ENCODE measurements at regions of chr14 and their contacts with region 1.

Region 1: GRCh38 chr14:58138714-58139482 is 13.1 kb downstream of the ARMH4 start:
- DNase-seq: no peak
- ATAC-seq: no peak
- H3K4me3 ChIP-seq: no peak overlapping the region
- H3K27ac ChIP-seq: no peak overlapping the region
- H3K4me1 ChIP-seq: no peaks in the 10 kb centered on the region
- H3K27me3 ChIP-seq: no peaks in the 10 kb centered on the region
- CTCF ChIP-seq: no peak
- POLR2A ChIP-seq: no peak
- RAD21 ChIP-seq: no peak

Region 2: DNA sequence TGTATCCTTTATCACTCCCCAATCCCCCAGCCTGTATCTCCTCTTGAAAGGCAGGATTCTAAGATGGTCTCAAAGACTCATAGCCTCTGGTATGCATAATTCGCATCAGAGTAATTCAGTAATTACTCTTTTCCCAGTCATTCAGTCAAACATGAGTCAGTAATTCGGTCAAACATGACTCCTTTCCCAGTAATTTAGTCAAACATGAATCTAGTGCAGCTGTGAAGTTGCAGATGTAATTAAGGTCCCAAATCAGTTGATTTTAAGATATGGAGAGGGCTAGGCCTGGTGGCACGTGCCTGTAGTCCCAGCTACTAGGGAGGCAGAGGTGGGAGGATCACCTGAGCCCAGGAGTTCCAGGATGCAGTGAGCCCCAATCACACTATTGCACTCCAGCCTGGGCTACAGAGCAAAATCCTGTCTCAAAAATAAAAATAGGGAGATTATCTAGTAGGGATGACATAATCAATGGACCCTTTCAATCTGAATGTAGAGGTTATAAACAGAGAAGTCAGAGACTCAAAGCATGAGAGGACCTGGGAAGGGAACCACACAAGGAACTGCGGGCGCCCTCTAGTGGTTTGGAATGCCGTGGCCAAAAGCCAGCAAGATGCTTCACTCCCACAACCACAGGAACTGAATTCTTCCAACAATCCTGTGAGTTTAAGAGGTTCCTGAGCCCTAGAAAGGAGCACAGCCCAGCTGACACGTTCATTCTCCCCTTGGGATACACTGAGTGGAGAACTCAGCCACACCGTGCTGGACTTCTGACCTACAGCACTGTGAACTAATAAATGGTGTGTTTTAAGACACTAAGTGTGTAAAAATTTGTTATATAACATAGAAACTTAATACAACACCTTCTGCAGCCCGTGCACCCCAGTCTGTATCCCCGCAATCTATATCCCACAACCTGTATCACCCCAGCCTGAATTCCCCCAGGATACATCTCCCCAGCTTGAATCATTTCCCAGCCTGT is 27.4 kb after region 1 on chr14:
- CTCF ChIA-PET with region 1: interaction called, 6 read pairs
- POLR2A ChIA-PET with region 1: no interaction called
- dilution Hi-C with region 1: no loop called
- in situ Hi-C with region 1: no loop called
- intact Hi-C with region 1: loop called (anchors 1 kb)
- DNase-seq: peak; percentile 78
- ATAC-seq: peak; percentile 78
- H3K4me3 ChIP-seq: no peak overlapping the region
- H3K27ac ChIP-seq: no peak overlapping the region
- H3K4me1 ChIP-seq: no peaks in the 10 kb centered on the region
- H3K27me3 ChIP-seq: peaks cover 6% of the 10 kb centered on the region
- CTCF ChIP-seq: peak; percentile 82
- POLR2A ChIP-seq: no peak
- RAD21 ChIP-seq: peak; percentile 66

Region 3: GRCh38 chr14:58244556-58245387 is 105.9 kb after region 1 on chr14 and contains the start of gene PSMA3:
- CTCF ChIA-PET with region 1: no interaction called
- POLR2A ChIA-PET with region 1: no interaction called
- dilution Hi-C with region 1: no loop called
- in situ Hi-C with region 1: no loop called
- intact Hi-C with region 1: no loop called
- DNase-seq: peak; percentile 95
- ATAC-seq: peak; percentile 95
- H3K4me3 ChIP-seq: peak within 1 kb of the TSS; percentile 80
- H3K27ac ChIP-seq: peak within 1 kb of the TSS; percentile 93
- H3K4me1 ChIP-seq: no peaks in the 10 kb centered on the region
- H3K27me3 ChIP-seq: no peaks in the 10 kb centered on the region
- CTCF ChIP-seq: no peak
- POLR2A ChIP-seq: peak; percentile 95
- RAD21 ChIP-seq: no peak
- total RNA-seq, gene PSMA3: 74.9 and 114 TPM in 2 replicates